Naive thymus-derived CD8-positive, alpha-beta T cell (primary cell): ENCODE measurements at regions of chr7 and their contacts with region 1.

Region 1: DNA sequence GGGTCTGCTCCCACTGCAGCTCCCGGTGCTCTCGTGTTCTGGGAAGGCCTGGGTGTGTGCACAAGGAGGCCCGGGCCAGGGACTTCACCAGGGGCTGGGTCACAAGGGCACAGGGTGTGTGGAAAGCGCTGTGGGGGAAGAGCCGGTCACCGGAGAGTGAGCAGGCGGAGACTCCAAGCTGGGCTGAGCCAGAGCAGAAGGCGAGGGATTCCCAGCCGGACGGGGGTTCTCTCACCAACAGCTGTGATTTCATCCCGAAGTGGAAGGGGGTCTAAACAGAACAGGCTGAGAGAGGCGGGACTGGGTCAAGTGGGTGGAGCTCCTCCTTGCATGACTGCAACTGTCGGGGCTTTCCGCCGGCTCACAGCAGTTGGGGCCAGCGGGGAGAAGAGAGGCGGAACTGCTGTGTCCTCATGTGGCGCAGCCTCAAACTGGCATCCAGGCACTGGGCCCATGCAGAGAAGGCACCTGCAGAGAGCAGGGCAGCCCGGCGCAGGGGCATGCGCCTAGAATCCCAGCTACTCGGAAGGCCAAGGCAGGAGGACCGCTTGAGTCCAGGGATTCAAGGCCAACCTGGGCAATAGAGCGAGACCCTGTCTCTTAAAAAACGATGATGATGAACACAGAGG is 7.6 kb upstream of the ORAI2 start:
- DNase-seq: peak in 9 of 10 donors; percentile 70 to 92 (median 83)
- ATAC-seq: peak; percentile 80 to 86
- H3K4me3 Mint-ChIP-seq: peak overlapping the region; percentile 80 to 94 (median 89)
- H3K27ac Mint-ChIP-seq: peak overlapping the region; percentile 100
- H3K4me1 Mint-ChIP-seq: peaks cover 37 to 96% (median 76%) of the 10 kb centered on the region in 4 donors
- H3K27me3 Mint-ChIP-seq: no peaks in the 10 kb centered on the region

Region 2: GRCh38 chr7:102129636-102130370 is 295.9 kb before region 1 on chr7:
- POLR2A ChIA-PET with region 1: no interaction called
- DNase-seq: no peak
- ATAC-seq: no peak
- H3K4me3 Mint-ChIP-seq: no peak overlapping the region
- H3K27ac Mint-ChIP-seq: no peak overlapping the region
- H3K4me1 Mint-ChIP-seq: peaks cover 0 to 4% (median 1%) of the 10 kb centered on the region in 4 donors
- H3K27me3 Mint-ChIP-seq: no peaks in the 10 kb centered on the region

Region 3: GRCh38 chr7:102396027-102397019 is 29.4 kb before region 1 on chr7 and contains the start of gene PRKRIP1:
- POLR2A ChIA-PET with region 1: interaction called, 14 read pairs
- DNase-seq: peak; percentile 73 to 95 (median 90)
- ATAC-seq: peak; percentile 97 to 99
- H3K4me3 Mint-ChIP-seq: peak within 1 kb of the TSS; percentile 89 to 99 (median 95)
- H3K27ac Mint-ChIP-seq: peak within 1 kb of the TSS; percentile 86 to 99 (median 96)
- H3K4me1 Mint-ChIP-seq: peaks cover 16 to 28% (median 23%) of the 10 kb centered on the region in 4 donors
- H3K27me3 Mint-ChIP-seq: no peaks in the 10 kb centered on the region
- polyA plus RNA-seq, gene PRKRIP1: 13.4 to 27.0 (median 17.7) TPM

Region 4: GRCh38 chr7:102440078-102440795 is 14.5 kb after region 1 on chr7:
- POLR2A ChIA-PET with region 1: interaction called, 449 read pairs
- DNase-seq: no peak
- ATAC-seq: no peak
- H3K4me3 Mint-ChIP-seq: no peak overlapping the region
- H3K27ac Mint-ChIP-seq: no peak overlapping the region
- H3K4me1 Mint-ChIP-seq: peaks cover 4 to 33% (median 11%) of the 10 kb centered on the region in 4 donors
- H3K27me3 Mint-ChIP-seq: no peaks in the 10 kb centered on the region

Region 5: GRCh38 chr7:102450242-102450641 is 24.5 kb after region 1 on chr7:
- POLR2A ChIA-PET with region 1: interaction called, 11 read pairs
- DNase-seq: peak; percentile 39 to 83 (median 52)
- ATAC-seq: peak; percentile 95 to 97
- H3K4me3 Mint-ChIP-seq: no peak overlapping the region
- H3K27ac Mint-ChIP-seq: peak overlapping the region in 8 of 10 donors; percentile 47 to 84 (median 56)
- H3K4me1 Mint-ChIP-seq: peaks cover 5 to 9% (median 6%) of the 10 kb centered on the region in 4 donors
- H3K27me3 Mint-ChIP-seq: no peaks in the 10 kb centered on the region

Region 6: GRCh38 chr7:102464577-102465280 is 39.0 kb after region 1 on chr7 and contains the starts of genes ALKBH4 and LRWD1:
- POLR2A ChIA-PET with region 1: interaction called, 17 read pairs
- DNase-seq: peak; percentile 86 to 96 (median 92)
- ATAC-seq: peak; percentile 95 to 96
- H3K4me3 Mint-ChIP-seq: peak within 1 kb of the TSS; percentile 83 to 95 (median 88)
- H3K27ac Mint-ChIP-seq: peak within 1 kb of the TSS; percentile 80 to 94 (median 85)
- H3K4me1 Mint-ChIP-seq: peaks cover 12 to 47% (median 35%) of the 10 kb centered on the region in 4 donors
- H3K27me3 Mint-ChIP-seq: no peaks in the 10 kb centered on the region
- polyA plus RNA-seq, gene ALKBH4: 14.8 to 17.3 (median 16.4) TPM
- polyA plus RNA-seq, gene LRWD1: 7.2 to 14.5 (median 11.4) TPM